Panc1 (cell line): ENCODE measurements at regions of chr13 and their contacts with region 1.

Region 1: DNA sequence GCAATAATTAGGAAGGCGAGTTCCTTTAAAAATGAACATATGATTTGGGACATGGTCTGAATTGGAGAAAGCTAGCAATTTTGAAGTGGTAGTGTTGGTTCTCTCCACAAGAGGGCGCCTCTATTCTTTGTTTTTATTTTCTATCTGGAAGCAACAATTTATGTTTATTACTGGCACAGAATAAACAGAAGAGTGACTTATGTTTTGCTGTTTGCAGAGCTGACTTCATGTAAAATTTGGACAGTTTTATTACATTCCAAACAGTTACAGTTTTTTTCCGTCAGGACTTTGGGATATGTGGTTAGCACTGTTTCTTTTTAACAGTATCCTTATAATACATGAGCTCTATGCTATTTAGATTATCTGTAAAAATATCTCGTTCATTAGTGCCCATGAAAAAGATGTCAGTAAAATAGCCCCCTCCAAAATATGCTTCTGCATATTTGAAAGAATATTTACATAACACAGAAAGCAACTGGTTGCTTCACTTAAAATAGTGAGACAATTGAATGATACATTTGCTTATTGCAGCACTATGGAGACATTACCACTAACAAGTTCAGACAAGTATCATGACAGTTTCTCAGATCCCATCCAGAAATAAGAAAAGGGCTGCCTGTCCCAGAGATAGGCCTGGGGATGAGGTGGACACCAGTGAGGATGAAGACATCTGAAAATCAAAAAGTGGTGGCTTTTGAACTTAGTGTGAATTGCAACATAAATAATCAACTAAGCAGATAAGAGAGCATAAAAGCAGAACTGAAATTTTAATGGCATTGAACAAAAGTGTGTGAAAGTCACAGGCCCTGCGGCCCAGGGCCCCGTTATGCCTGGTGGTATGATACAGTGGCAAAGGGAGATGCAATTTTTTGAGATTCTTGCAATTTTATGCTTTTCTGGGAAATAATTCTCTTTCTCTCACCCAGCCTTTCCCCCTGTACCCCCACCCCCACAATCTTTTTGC is 32.3 kb upstream of the FGF9 start:
- DNase-seq: no peak
- ATAC-seq: no peak
- H3K4me3 ChIP-seq: no peak overlapping the region
- H3K27ac ChIP-seq: no peak overlapping the region
- H3K4me1 ChIP-seq: no peaks in the 10 kb centered on the region
- H3K27me3 ChIP-seq: no peaks in the 10 kb centered on the region; the same call in 1 of the 2 replicates
- CTCF ChIP-seq: peak; percentile 71

Region 2: GRCh38 chr13:21777813-21778212 is 139.2 kb after region 1 on chr13:
- CTCF ChIA-PET with region 1: no interaction called
- POLR2A ChIA-PET with region 1: no interaction called
- in situ Hi-C with region 1: no loop called
- intact Hi-C with region 1: loop called (anchors 10 kb)
- DNase-seq: no peak
- ATAC-seq: no peak
- H3K4me3 ChIP-seq: no peak overlapping the region
- H3K27ac ChIP-seq: no peak overlapping the region
- H3K4me1 ChIP-seq: no peaks in the 10 kb centered on the region
- H3K27me3 ChIP-seq: no peaks in the 10 kb centered on the region
- CTCF ChIP-seq: no peak

Region 3: DNA sequence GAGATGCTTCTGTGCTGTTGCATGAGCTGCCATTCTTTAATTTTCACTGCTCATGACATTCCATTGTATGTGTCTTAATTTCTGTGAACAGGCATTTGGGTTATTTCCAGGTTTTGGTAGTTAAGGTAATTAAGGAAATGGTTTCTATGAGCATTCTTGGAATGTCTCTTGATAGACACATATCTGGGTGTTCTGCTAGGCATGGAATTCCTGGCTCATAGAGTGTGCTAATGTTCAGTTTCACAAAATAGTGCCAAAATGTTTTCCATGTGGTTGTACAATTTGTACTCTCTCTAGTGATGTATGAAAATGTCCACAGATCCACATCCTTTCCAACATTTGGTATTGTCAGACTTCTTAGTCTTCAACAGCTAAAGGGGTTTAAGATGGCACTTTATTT is 861.3 kb after region 1 on chr13:
- CTCF ChIA-PET with region 1: interaction called, 12 read pairs
- POLR2A ChIA-PET with region 1: no interaction called
- in situ Hi-C with region 1: no loop called
- intact Hi-C with region 1: no loop called
- DNase-seq: no peak
- ATAC-seq: no peak
- H3K4me3 ChIP-seq: no peak overlapping the region
- H3K27ac ChIP-seq: no peak overlapping the region
- H3K4me1 ChIP-seq: no peaks in the 10 kb centered on the region
- H3K27me3 ChIP-seq: no peaks in the 10 kb centered on the region
- CTCF ChIP-seq: no peak